RWPE1 (cell line): ENCODE measurements at regions of chr1 and their contacts with region 1.

Region 1: GRCh38 chr1:41573785-41574713 is 89.6 kb upstream of the EDN2 start:
- DNase-seq: peak; percentile 75
- H3K27ac ChIP-seq: no peak overlapping the region
- CTCF ChIP-seq: peak; percentile 93

Region 2: GRCh38 chr1:41496080-41497055 is 77.7 kb before region 1 on chr1:
- CTCF ChIA-PET with region 1: no interaction called
- POLR2A ChIA-PET with region 1: no interaction called
- DNase-seq: peak; percentile 75
- H3K27ac ChIP-seq: peak overlapping the region; percentile 93
- CTCF ChIP-seq: no peak

Region 3: GRCh38 chr1:41589395-41589794 is 15.3 kb after region 1 on chr1:
- CTCF ChIA-PET with region 1: no interaction called
- POLR2A ChIA-PET with region 1: no interaction called
- DNase-seq: no peak
- H3K27ac ChIP-seq: no peak overlapping the region
- CTCF ChIP-seq: no peak

Region 4: DNA sequence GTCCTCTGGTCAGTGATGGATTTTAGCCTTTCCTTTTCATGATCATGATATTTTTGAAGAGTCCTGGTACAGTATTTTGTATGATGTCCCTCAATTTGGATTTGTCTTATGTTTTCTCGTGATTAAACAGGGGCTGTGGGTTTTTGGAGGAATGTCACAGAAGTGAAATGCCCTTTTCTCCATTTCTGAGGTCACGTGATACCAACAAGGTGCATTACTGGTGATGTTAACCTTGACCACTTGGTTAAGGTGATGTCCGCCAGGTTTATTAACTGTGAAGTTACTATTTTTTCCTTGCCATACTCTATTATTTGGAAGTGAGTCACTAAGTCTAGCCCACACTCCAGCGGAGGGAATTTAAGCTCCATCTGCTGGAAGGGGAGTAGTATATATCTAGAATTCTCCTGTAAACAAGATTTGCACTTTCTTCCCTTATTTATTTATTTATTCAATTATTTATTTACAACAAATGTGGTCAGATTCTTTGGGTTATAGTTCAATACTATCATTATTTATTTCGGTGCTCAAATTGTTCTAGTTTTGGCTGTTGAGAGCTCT is 221.2 kb after region 1 on chr1:
- CTCF ChIA-PET with region 1: interaction called, 12 read pairs
- POLR2A ChIA-PET with region 1: no interaction called
- DNase-seq: peak; percentile 27
- H3K27ac ChIP-seq: no peak overlapping the region
- CTCF ChIP-seq: peak; percentile 32; the same call in 1 of the 2 replicates